B cell (primary cell): ENCODE measurements at regions of chr22 and their contacts with region 1.

Region 1: GRCh38 chr22:37457093-37457893 is 28.9 kb downstream of the MFNG start:
- DNase-seq: peak; percentile 82
- ATAC-seq: peak; percentile 95
- H3K4me3 ChIP-seq: no peak overlapping the region
- H3K4me3 Mint-ChIP-seq: no peak overlapping the region
- H3K27ac ChIP-seq: no peak overlapping the region
- H3K27ac Mint-ChIP-seq: no peak overlapping the region
- H3K4me1 ChIP-seq: no peaks in the 10 kb centered on the region
- H3K4me1 Mint-ChIP-seq: peaks cover 1% of the 10 kb centered on the region
- H3K27me3 ChIP-seq: no peaks in the 10 kb centered on the region
- H3K27me3 Mint-ChIP-seq: no peaks in the 10 kb centered on the region
- CTCF ChIP-seq: peak; percentile 97

Region 2: DNA sequence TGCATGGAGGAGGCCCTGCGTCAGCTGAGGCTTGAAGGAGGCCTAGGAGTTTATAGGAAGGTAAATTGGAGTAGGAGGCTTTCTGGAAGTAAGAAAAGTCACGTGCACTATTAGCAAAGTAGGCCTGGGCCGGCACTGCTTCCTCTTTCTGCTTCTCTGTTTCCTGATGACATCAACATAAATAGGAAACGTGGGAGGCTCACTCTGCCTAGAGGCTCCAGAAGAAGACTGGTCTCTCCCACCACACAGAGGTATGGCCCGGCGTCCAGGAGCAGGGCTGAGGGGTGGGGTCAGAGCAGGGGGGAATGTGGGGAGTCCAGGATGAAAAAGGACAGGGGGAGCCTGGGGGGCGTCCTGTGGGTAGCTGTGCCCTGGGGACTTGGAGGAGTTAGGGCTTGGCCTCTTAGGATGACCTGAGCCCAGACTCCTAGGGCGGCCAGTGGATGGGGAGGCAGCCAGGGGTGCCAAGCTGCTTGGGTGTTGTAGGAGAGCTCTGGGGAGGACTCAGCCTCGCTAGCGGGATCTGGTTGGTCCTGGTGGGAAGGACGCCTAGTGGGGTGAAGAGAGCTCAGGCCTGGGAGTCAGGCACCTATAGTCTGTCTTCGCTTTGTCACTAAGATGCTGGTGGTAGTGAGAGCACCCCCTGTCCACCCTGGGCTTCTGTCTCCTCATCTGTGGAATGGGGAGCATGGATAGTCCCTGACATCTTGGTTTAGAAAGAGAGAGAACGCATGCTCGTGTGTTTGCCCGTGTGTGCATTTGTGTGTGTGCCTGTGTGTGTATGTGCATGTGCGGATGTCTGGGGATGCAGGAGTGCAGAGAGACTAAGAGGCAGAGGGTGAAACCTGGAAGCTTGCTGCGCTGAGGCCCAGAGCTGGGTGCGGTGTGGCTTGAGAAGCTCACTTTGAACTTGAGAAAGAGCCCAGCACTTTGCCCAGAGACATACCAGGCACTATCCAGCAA is 543.6 kb before region 1 on chr22 and contains the start of gene CSF2RB:
- CTCF ChIA-PET with region 1: no interaction called
- POLR2A ChIA-PET with region 1: no interaction called
- intact Hi-C with region 1: no loop called
- DNase-seq: peak; percentile 77
- ATAC-seq: peak; percentile 87
- H3K4me3 ChIP-seq: peak within 1 kb of the TSS; percentile 61 to 77 (median 76)
- H3K4me3 Mint-ChIP-seq: peak within 1 kb of the TSS; percentile 93
- H3K27ac ChIP-seq: peak within 1 kb of the TSS; percentile 87 to 91
- H3K27ac Mint-ChIP-seq: peak within 1 kb of the TSS; percentile 90
- H3K4me1 ChIP-seq: peaks cover 14 to 19% of the 10 kb centered on the region in 2 donors
- H3K4me1 Mint-ChIP-seq: peaks cover 40% of the 10 kb centered on the region
- H3K27me3 ChIP-seq: no peaks in the 10 kb centered on the region
- H3K27me3 Mint-ChIP-seq: peaks cover 3% of the 10 kb centered on the region
- CTCF ChIP-seq: no peak
- total RNA-seq, gene CSF2RB: 39.7 and 41.2 TPM in 2 replicates

Region 3: DNA sequence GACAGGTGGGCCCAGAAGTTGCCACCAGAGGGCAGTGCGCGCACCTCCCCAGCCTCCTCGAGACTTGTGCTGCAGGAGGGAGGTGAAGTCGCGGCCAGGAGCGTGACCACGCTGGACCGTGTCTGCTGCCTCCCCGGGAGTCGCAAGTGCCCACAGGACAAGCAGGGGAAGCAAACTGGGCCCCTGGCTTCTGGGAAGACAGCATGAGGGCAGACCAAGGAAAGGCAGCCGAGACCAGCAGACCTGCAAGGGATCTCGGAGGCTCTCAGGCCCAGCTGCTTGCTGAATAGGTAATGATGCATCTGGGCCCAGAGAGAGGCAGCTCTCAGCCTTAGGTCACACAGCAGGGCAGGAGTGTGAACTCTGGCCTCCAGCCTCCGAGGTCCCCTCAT is 290.6 kb before region 1 on chr22:
- CTCF ChIA-PET with region 1: no interaction called
- POLR2A ChIA-PET with region 1: no interaction called
- intact Hi-C with region 1: loop called (anchors 1 kb)
- DNase-seq: peak; percentile 84
- ATAC-seq: peak; percentile 59
- H3K4me3 ChIP-seq: no peak overlapping the region
- H3K4me3 Mint-ChIP-seq: peak overlapping the region; percentile 57
- H3K27ac ChIP-seq: no peak overlapping the region
- H3K27ac Mint-ChIP-seq: peak overlapping the region; percentile 47
- H3K4me1 ChIP-seq: peaks cover 17 to 46% of the 10 kb centered on the region in 2 donors
- H3K4me1 Mint-ChIP-seq: peaks cover 40% of the 10 kb centered on the region
- H3K27me3 ChIP-seq: no peaks in the 10 kb centered on the region
- H3K27me3 Mint-ChIP-seq: peaks cover 4% of the 10 kb centered on the region
- CTCF ChIP-seq: peak; percentile 92

Region 4: GRCh38 chr22:37445501-37445900 is 11.8 kb before region 1 on chr22:
- CTCF ChIA-PET with region 1: interaction called, 7 read pairs
- POLR2A ChIA-PET with region 1: interaction called, 19 read pairs
- intact Hi-C with region 1: no loop called
- DNase-seq: no peak
- ATAC-seq: no peak
- H3K4me3 ChIP-seq: no peak overlapping the region
- H3K4me3 Mint-ChIP-seq: no peak overlapping the region
- H3K27ac ChIP-seq: no peak overlapping the region
- H3K27ac Mint-ChIP-seq: no peak overlapping the region
- H3K4me1 ChIP-seq: no peaks in the 10 kb centered on the region
- H3K4me1 Mint-ChIP-seq: peaks cover 1% of the 10 kb centered on the region
- H3K27me3 ChIP-seq: peaks cover 0 to 25% (median 4%) of the 10 kb centered on the region in 4 experiments
- H3K27me3 Mint-ChIP-seq: peaks cover 18% of the 10 kb centered on the region
- CTCF ChIP-seq: no peak

Region 5: DNA sequence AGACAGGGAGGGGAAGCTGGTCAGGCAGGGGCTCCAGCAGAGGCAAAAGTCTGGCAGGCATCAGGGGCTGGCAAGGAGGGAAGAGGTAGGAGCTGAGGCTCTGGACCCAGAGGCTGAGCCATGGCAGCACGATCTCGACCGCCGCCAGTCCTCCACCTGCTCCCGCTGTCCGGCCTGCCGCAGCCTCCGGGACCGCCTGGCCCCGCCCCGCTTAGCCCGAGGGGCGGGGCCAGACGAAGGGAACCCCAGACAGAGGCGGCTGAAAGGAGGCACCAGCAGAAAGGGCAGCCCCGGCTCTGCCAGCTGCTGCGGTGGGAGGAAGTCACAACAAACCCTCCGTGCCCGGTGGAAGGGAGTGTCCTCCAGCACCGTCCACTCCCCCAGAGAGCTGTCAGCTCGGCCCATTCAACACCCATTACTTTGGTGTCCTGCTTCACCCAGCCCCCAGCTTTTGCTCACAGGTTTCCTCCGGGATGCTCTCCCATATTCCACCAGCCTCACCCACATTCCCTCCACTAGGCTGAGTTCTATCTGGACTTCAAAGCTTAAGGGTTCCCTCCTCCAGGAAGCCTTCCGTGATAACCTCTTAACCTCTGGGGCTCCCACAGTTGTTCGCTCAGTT is 29.0 kb after region 1 on chr22 and contains the start of gene MFNG:
- CTCF ChIA-PET with region 1: interaction called, 10 read pairs
- POLR2A ChIA-PET with region 1: no interaction called
- intact Hi-C with region 1: no loop called
- DNase-seq: peak; percentile 86
- ATAC-seq: peak; percentile 78
- H3K4me3 ChIP-seq: peak within 1 kb of the TSS; percentile 63 to 91 (median 80)
- H3K4me3 Mint-ChIP-seq: peak within 1 kb of the TSS; percentile 98
- H3K27ac ChIP-seq: peak within 1 kb of the TSS; percentile 70 to 93
- H3K27ac Mint-ChIP-seq: peak within 1 kb of the TSS; percentile 98
- H3K4me1 ChIP-seq: peaks cover 24 to 47% of the 10 kb centered on the region in 2 donors
- H3K4me1 Mint-ChIP-seq: peaks cover 55% of the 10 kb centered on the region
- H3K27me3 ChIP-seq: no peaks in the 10 kb centered on the region
- H3K27me3 Mint-ChIP-seq: no peaks in the 10 kb centered on the region
- CTCF ChIP-seq: no peak
- total RNA-seq, gene MFNG: 95.9 and 109 TPM in 2 replicates